ENCODE measurements at regions of chr2 and their contacts with region 1.

Region 1: DNA sequence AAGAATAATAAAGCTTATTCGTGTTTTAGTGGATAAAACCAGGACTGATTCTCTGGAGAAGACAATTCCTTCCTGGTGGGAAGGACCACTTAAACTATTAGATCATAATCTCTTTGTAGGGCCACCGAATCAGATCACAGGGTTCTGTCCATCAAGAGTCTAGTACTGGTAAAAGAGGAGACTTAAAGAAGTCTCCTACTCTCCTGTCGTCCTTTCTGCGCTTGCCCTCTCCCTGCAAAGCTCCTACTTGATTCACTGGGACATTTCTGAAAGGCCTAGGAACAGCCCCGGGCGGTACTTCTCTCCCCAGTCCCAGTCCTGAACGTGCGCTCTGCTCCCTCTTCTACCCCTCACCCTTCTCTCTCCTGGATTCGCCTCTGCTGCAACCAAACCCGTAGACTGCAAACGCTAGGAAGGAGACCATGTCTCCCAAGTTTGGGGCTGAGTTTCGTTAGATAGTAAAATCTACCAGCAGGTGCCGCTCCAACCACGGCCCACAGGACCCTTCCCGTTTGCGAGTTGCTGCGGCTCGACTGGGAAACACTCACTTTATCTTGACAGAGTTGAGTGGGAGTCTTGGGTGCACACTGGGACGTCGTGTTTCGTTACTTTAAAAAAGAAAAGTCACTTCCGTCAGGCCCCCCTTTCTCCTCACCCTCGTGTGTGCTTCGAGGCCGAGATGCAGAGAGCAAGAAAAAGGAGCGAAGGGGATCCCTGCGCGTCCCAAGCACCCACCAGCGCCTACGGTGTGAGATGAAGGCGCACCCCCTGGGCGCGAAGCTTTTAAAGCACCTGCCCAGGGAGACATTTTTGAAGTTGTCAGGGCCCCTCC is 923 bp downstream of the FIGLA start:
- DNase-seq: peak; percentile 58 to 80
- ATAC-seq: peak; percentile 58 to 86 (median 76)
- H3K4me3 ChIP-seq: peak overlapping the region; percentile 18
- H3K4me3 Mint-ChIP-seq: peak overlapping the region; percentile 93
- H3K27ac ChIP-seq: no peak overlapping the region
- H3K27ac Mint-ChIP-seq: peak overlapping the region in 1 of 2 donors; percentile 34
- H3K4me1 ChIP-seq: peaks cover 14% of the 10 kb centered on the region
- H3K4me1 Mint-ChIP-seq: peaks cover 8 to 18% of the 10 kb centered on the region in 2 donors
- H3K27me3 ChIP-seq: peaks cover 24% of the 10 kb centered on the region
- H3K27me3 Mint-ChIP-seq: peaks cover 45 to 65% of the 10 kb centered on the region in 2 donors
- CTCF ChIP-seq: peak; percentile 71

Region 2: DNA sequence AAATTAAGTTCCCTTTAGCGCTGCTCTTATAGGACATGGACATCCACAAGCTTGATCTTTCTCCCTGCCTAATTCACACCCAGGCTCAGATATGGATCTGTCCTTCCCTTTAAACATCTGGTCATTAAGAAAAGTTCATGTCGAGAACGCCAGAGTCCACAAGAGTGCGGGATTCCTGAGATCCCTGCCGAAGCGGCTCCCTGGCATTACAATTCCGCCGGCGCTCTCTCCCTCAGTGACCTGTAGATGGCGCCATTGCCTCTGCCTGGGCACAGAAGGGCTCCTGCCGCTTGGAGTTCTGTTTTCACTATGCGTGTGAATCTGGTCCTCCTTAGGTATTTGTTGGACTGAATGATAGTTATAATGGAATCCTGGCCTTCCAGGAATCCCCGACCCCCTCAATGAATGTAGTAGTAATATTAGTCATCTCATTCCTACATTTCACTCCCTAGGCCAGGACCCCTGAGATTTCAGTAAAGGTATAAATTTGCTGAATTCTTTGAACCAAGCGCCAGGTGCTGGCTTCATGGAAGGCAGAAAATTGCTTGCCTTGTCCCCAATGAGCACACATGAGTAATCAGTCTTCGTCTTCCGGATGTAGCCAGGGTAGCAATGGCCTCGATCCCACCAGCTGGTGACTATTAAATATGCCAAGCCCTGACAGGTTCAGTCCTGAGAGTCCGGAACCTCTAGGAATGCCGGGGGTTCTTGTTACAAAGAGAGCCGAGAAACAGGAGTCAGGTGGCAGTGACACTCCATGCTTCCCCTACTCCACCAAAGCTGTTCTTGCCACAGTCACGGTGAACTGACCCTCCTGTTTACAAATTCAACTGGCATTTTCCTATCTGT is 72.5 kb after region 1 on chr2:
- intact Hi-C with region 1: loop called (anchors 2 kb)
- DNase-seq: peak; percentile 72 to 85
- ATAC-seq: peak; percentile 81 to 99 (median 95)
- H3K4me3 ChIP-seq: no peak overlapping the region
- H3K4me3 Mint-ChIP-seq: peak overlapping the region; percentile 43
- H3K27ac ChIP-seq: no peak overlapping the region
- H3K27ac Mint-ChIP-seq: peak overlapping the region in 1 of 2 donors; percentile 65
- H3K4me1 ChIP-seq: peaks cover 6% of the 10 kb centered on the region
- H3K4me1 Mint-ChIP-seq: peaks cover 6 to 15% of the 10 kb centered on the region in 2 donors
- H3K27me3 ChIP-seq: peaks cover 5% of the 10 kb centered on the region
- H3K27me3 Mint-ChIP-seq: peaks cover 7 to 23% of the 10 kb centered on the region in 2 donors
- CTCF ChIP-seq: peak; percentile 96

Region 3: DNA sequence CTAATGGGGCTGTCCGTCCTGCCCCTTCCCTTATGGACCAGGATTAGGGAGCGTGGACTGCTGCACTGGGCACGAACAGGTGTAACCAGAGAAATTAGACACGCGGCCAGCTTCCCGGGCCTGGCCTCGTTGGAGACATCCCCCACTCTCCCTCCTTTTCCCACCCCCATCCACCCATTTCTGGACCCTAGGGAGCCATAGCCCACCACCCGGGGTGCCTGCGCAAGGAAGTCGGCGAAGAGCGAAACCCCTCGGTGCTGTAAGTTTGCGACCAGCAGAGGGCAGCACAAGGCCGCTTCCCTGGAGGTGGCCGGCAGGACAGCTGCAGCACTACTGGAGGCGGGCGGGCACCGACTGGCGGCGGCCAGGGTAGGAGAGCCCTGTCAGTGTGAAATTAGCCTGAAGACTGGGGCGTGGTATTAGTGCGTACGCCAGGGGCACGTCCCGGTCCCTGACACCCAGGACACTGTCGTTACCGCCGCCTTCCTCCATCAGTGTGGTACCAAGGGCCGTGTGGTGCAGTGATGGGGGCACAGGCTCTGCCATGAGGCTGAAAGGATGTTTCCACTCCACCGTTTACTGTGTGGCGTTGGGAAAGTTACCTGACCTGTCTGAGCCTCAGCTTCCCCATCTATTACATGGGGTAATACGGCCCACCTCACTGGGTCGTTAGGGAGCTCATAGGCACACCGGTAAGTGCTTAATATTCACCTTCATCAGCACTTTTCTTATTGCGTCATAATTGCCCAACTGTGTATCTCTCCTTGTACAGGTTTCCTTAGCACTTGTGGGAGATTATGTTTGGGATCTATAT is 82.1 kb after region 1 on chr2:
- intact Hi-C with region 1: loop called (anchors 1 kb)
- DNase-seq: peak; percentile 84 to 89
- ATAC-seq: peak; percentile 90 to 100 (median 99)
- H3K4me3 ChIP-seq: no peak overlapping the region
- H3K4me3 Mint-ChIP-seq: no peak overlapping the region
- H3K27ac ChIP-seq: no peak overlapping the region
- H3K27ac Mint-ChIP-seq: no peak overlapping the region
- H3K4me1 ChIP-seq: peaks cover 11% of the 10 kb centered on the region
- H3K4me1 Mint-ChIP-seq: peaks cover 6 to 7% of the 10 kb centered on the region in 2 donors
- H3K27me3 ChIP-seq: peaks cover 25% of the 10 kb centered on the region
- H3K27me3 Mint-ChIP-seq: peaks cover 27 to 34% of the 10 kb centered on the region in 2 donors
- CTCF ChIP-seq: peak; percentile 90

Measured in natural killer cell (primary cell).